ENCODE measurements at regions of chr7 and their contacts with region 1.

Region 1: DNA sequence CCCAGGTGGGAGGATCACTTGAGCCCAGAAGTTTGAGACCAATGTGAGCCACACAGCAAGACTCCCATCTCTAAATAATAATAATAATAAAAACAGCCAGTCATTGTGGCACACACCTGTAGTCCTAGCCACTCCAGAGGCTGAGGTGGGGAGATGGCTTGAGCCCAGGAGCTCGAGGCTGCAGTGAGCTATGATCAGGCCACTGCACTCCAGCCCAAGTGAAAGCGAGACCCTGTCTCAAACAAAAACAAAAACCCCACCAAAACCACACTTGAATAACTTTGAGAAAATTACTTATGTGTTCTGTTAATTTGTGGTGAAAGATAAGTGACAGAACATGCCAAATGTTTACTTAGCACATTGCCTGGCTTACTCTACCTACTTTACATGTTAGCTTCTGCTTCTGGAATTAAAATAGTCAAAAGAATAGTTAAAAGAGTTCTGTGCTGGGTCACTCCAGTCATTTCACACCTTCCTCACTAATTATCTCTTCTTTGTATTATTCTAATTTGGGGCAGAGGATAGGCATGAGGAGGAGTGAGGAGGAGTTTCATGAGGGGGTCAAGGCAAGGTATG is 9.8 kb downstream of the TMEM60 start:
- DNase-seq: no peak
- ATAC-seq: no peak
- H3K4me3 ChIP-seq: no peak overlapping the region
- H3K4me3 Mint-ChIP-seq: no peak overlapping the region
- H3K27ac ChIP-seq: no peak overlapping the region
- H3K27ac Mint-ChIP-seq: no peak overlapping the region
- H3K4me1 ChIP-seq: no peaks in the 10 kb centered on the region
- H3K4me1 Mint-ChIP-seq: no peaks in the 10 kb centered on the region
- H3K27me3 ChIP-seq: no peaks in the 10 kb centered on the region
- H3K27me3 Mint-ChIP-seq: no peaks in the 10 kb centered on the region
- CTCF ChIP-seq: no peak

Region 2: GRCh38 chr7:77855371-77856083 is 67.1 kb after region 1 on chr7:
- CTCF ChIA-PET with region 1: no interaction called
- POLR2A ChIA-PET with region 1: no interaction called
- intact Hi-C with region 1: no loop called
- DNase-seq: no peak
- ATAC-seq: no peak
- H3K4me3 ChIP-seq: no peak overlapping the region
- H3K4me3 Mint-ChIP-seq: no peak overlapping the region
- H3K27ac ChIP-seq: no peak overlapping the region
- H3K27ac Mint-ChIP-seq: no peak overlapping the region
- H3K4me1 ChIP-seq: peaks cover 18% of the 10 kb centered on the region
- H3K4me1 Mint-ChIP-seq: peaks cover 60% of the 10 kb centered on the region
- H3K27me3 ChIP-seq: no peaks in the 10 kb centered on the region
- H3K27me3 Mint-ChIP-seq: no peaks in the 10 kb centered on the region
- CTCF ChIP-seq: no peak

Region 3: GRCh38 chr7:77903597-77903996 is 115.2 kb after region 1 on chr7:
- CTCF ChIA-PET with region 1: no interaction called
- POLR2A ChIA-PET with region 1: no interaction called
- intact Hi-C with region 1: loop called (anchors 10 kb)
- DNase-seq: peak in 3 of 14 experiments; percentile 7 to 21 (median 15)
- ATAC-seq: peak; percentile 54
- H3K4me3 ChIP-seq: no peak overlapping the region
- H3K4me3 Mint-ChIP-seq: no peak overlapping the region
- H3K27ac ChIP-seq: no peak overlapping the region
- H3K27ac Mint-ChIP-seq: no peak overlapping the region
- H3K4me1 ChIP-seq: no peaks in the 10 kb centered on the region
- H3K4me1 Mint-ChIP-seq: peaks cover 11% of the 10 kb centered on the region
- H3K27me3 ChIP-seq: no peaks in the 10 kb centered on the region
- H3K27me3 Mint-ChIP-seq: no peaks in the 10 kb centered on the region
- CTCF ChIP-seq: peak; percentile 15

Measured in CD4-positive, alpha-beta T cell (primary cell).